GM10248 (cell line): ENCODE measurements at regions of chr11 and their contacts with region 1.

Region 1: DNA sequence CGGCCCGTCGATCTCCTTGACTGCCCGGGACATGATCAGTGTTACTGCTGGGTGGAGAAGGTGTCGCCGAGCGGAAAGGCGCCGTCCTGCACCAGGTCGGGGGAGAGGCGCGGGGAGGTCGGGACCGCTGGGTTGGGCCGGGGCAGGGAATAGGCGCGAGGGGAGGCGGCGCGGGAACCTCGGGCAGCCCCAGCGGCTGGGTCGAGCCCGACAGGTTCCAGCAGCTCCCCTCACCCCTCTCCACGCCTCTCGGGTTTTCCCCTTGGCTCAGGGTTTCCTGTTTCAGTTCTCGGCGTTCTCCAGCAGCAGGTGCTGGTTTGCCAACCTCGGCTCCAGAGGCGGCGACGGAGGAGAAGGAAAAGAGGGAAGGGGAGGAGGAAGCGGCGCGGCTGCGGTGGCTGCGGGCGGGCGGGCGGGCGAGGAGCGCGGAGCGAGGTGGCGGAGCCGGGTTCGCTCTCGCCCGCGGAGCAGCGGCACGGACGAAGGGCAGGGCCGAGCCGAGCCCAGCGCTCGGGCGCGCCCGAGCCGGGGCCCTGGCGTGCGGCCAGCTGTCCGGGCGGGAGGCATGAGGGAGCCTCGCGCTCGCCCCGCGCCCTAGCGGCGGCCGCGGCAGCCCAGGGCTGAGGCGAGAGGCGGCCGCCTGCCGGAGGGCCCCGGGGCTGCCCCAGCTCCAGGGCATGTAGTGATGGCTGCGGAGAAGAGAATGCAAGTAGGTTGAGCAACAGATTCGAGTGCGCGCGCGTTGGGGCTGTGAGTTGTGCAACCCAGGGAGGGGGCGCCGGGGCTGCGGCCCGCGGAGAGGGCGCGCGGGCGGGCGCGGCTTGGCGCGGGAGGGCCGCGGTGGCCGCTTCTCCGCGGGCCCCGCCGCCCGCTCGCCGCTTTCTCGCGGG is at the start of gene ZC3H12C:
- DNase-seq: peak; percentile 80
- CTCF ChIP-seq: peak; percentile 35

Region 2: DNA sequence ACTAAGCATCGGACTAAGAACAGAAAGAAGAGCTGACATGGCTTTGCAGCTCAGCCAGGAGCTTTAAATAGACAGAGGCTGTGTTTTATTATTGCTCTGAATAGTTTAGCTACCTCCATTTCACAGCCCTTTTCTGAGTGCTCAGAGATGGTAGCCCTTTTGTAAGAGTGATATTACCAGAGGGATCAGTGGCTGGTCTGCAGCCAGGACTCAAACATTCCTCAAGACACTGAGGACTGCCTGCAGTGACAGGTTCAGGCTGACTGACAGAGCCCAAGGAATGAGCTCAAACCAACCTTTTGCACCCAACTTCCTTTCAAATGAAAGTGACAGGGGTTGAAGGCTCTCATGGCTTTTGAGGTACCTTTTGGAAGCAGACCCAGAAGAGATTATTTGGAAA is 1238.9 kb before region 1 on chr11:
- CTCF ChIA-PET with region 1: no interaction called
- POLR2A ChIA-PET with region 1: no interaction called
- DNase-seq: no peak
- CTCF ChIP-seq: no peak

Region 3: DNA sequence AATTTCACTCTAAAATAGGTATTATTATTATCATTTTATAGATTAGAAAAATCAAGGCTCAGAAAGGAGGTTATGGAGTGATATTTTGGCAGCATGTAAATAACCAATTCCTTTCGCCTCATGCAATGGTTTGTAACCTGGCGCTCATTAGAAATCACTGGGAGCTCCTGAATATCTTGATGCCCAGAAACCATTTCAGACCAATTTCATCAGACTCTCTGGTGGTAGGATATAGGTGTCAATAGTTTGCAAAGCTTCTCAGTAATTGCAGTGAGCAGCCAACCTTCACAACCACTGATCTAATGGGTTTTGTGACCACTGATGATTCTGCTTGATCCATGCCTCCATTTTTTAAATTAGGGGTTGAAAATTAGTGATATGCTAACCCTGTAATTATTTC is 57.4 kb before region 1 on chr11:
- CTCF ChIA-PET with region 1: no interaction called
- POLR2A ChIA-PET with region 1: no interaction called
- DNase-seq: no peak
- CTCF ChIP-seq: no peak

Region 4: DNA sequence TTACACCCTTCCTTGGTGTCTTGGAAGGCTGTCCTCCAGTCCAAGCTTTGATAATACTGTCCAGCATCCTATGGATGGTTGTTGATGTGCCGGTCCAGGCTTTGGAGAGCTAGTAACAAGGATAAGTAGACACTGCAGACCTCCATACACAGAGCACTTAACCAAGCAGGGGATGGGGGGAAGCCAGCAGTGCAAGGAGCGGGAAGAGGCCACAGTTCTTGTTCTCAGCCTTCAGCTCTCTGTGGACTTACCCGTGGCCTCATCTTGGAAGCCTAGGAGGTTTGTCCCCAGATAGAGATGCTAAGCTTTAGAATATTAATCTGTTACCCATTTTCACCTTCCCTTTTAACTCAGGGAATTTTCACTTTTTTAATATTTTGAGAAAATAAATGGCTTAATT is 30.5 kb before region 1 on chr11:
- CTCF ChIA-PET with region 1: no interaction called
- POLR2A ChIA-PET with region 1: no interaction called
- DNase-seq: no peak
- CTCF ChIP-seq: no peak

Region 5: DNA sequence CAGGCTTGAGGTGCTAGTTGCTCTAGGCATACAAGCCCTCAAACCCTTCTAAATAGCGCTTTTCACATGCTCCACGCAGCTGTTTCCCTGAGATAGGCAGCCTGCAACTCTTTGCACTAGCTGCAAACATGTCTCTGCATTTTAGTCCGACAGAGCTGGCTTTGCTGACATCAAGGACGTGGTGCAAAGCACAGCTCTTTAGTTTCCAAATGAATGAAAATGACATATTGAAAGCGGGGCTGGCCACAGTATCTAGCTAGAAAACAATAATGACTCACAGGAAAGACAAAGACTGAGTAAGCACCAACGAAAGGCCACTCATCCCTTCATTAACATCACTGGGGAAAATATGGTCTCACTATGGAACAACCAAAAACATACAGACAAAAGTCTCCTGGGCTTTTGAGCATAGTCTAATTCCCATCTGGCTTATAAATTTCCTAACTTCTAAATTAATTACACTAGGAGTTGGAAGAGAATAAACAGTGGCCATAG is 14.9 kb before region 1 on chr11:
- CTCF ChIA-PET with region 1: interaction called, 15 read pairs
- POLR2A ChIA-PET with region 1: interaction called, 3 read pairs
- DNase-seq: peak; percentile 43
- CTCF ChIP-seq: no peak